A673 (cell line): ENCODE measurements at regions of chr22 and their contacts with region 1.

Region 1: DNA sequence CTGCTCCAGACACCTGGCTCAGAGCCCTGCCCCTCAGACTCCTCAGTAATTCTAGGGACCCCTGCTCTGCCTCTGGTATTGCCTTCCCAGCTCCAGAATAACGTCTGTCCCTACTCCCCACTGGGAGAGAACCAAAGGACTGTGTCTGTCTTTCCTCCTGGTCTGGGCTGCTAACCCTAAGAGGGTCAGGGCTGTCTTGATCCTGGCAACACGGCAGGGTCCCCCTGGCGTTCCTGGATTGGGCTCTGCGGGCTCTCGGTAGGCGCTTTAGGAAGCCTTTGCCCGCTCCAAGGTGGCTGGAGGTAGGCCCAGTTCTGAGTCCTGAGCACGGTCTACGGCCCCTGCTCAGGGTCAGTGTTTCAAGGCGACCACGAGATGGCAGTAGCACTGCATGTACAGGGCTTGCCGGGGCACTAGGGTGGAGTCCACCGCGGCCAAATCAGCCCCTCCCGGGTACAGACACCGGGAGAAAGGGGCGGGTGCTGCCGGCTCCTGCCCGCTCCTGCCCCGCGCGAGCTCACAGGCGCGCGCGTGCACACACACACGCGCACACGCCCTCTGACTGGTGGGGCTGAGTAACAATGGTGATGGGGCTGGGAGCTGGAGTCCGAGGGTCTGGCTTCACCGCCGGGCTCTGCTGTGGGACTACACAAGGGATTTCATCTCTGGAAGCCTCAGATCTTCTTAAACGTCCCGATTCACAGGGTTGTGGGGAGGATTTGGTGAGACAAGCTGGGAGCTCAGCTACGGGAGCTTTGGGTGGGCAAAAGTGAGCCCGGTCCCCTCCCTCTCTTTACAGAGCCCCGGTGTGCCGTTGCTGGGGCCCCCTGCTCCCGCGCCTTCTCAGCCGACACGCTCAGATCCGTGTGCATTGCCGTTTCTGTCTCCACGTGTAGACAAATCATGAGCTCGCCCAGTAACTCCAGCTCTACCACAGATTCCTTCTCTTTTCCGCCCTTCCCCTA is 30.1 kb upstream of the HMOX1 start:
- DNase-seq: peak; percentile 91
- H3K4me3 ChIP-seq: peak overlapping the region; percentile 55
- H3K27ac ChIP-seq: peak overlapping the region; percentile 27
- H3K4me1 ChIP-seq: peaks cover 13% of the 10 kb centered on the region
- H3K27me3 ChIP-seq: no peaks in the 10 kb centered on the region
- CTCF ChIP-seq: peak; percentile 90

Region 2: GRCh38 chr22:35582861-35583670 is 232.2 kb after region 1 on chr22:
- CTCF ChIA-PET with region 1: interaction called, 6 read pairs
- POLR2A ChIA-PET with region 1: no interaction called
- intact Hi-C with region 1: loop called (anchors 2 kb)
- DNase-seq: peak; percentile 72
- H3K4me3 ChIP-seq: no peak overlapping the region
- H3K27ac ChIP-seq: no peak overlapping the region
- H3K4me1 ChIP-seq: no peaks in the 10 kb centered on the region
- H3K27me3 ChIP-seq: no peaks in the 10 kb centered on the region
- CTCF ChIP-seq: peak; percentile 93

Region 3: DNA sequence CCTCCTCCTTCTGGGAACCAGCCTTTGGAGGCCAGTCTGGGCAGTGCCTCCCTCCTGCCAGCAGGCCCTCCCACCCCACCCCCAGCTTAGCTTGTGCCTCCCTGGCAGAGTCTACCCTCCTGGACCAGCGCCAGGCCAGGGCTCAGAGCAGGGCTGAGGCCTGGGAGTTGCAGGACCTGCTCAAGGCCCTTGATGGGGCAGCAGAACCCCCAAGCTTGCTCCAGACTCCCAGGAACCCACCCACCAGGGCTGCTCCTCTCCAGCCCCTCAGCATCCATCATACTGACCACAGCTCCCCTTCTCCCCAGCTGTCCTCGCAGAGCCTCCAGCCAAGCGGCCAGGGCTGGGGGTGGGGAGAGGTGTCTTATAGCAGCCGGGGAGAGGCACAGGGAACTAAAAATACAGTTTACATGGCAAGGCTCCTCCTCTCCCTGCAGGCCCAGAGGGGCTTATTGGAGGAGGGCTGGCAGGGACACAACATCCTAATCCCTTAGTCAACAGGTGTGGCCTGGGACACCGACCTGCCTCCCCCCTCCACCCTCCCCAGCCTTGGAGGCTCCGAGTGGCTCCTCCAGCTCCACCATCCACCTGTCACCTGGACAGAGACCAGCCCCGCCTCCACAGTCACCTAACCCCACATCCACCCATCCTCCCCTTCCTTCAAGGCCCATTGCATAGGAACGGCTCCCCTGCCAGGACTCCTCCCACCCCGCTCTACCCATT is 271.5 kb after region 1 on chr22:
- CTCF ChIA-PET with region 1: interaction called, 4 read pairs
- POLR2A ChIA-PET with region 1: no interaction called
- intact Hi-C with region 1: loop called (anchors 2 kb)
- DNase-seq: peak; percentile 14
- H3K4me3 ChIP-seq: no peak overlapping the region
- H3K27ac ChIP-seq: no peak overlapping the region
- H3K4me1 ChIP-seq: peaks cover 15% of the 10 kb centered on the region
- H3K27me3 ChIP-seq: no peaks in the 10 kb centered on the region
- CTCF ChIP-seq: no peak